ENCODE measurements at regions of chr11 and their contacts with region 1.

Region 1: GRCh38 chr11:91717169-91717568 is 507.4 kb upstream of the FAT3 start:
- DNase-seq: no peak
- H3K4me3 ChIP-seq: no peak overlapping the region
- H3K27ac ChIP-seq: no peak overlapping the region
- H3K4me1 ChIP-seq: no peaks in the 10 kb centered on the region
- H3K27me3 ChIP-seq: no peaks in the 10 kb centered on the region
- CTCF ChIP-seq: no peak

Region 2: GRCh38 chr11:91700854-91701253 is 16.3 kb before region 1 on chr11:
- CTCF ChIA-PET with region 1: no interaction called
- POLR2A ChIA-PET with region 1: no interaction called
- intact Hi-C with region 1: loop called (anchors 2 kb)
- DNase-seq: peak; percentile 7
- H3K4me3 ChIP-seq: no peak overlapping the region
- H3K27ac ChIP-seq: no peak overlapping the region
- H3K4me1 ChIP-seq: no peaks in the 10 kb centered on the region
- H3K27me3 ChIP-seq: no peaks in the 10 kb centered on the region
- CTCF ChIP-seq: no peak

Region 3: DNA sequence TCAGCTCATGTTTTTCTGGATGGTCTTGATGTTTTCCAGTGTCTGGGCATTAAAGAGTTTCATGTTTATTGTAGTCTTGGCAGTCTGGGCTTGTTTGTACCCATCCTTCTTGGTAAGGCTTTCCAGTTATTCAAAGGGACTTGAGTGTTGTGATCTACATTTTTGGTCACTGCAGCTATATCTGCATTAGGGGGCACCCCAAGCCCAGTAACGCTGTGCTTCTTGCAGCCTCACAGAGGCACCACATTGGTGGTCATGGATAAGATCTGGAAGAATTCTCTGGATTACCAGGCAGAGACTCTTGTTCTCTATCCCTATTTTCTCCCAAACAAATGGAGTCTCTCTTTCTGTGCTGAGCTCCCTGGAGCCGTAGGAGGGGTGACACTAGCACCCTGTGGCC is 55.9 kb after region 1 on chr11:
- CTCF ChIA-PET with region 1: no interaction called
- POLR2A ChIA-PET with region 1: no interaction called
- intact Hi-C with region 1: no loop called
- DNase-seq: peak; percentile 86
- H3K4me3 ChIP-seq: no peak overlapping the region
- H3K27ac ChIP-seq: no peak overlapping the region
- H3K4me1 ChIP-seq: peaks cover 9% of the 10 kb centered on the region
- H3K27me3 ChIP-seq: no peaks in the 10 kb centered on the region
- CTCF ChIP-seq: peak; percentile 81

Region 4: GRCh38 chr11:91804042-91804441 is 86.9 kb after region 1 on chr11:
- CTCF ChIA-PET with region 1: no interaction called
- POLR2A ChIA-PET with region 1: no interaction called
- intact Hi-C with region 1: no loop called
- DNase-seq: peak; percentile 91
- H3K4me3 ChIP-seq: no peak overlapping the region
- H3K27ac ChIP-seq: peak overlapping the region; percentile 25
- H3K4me1 ChIP-seq: peaks cover 26% of the 10 kb centered on the region
- H3K27me3 ChIP-seq: no peaks in the 10 kb centered on the region
- CTCF ChIP-seq: no peak

Measured in A673 (cell line).